ENCODE measurements at regions of chr16 and their contacts with region 1.

Region 1: DNA sequence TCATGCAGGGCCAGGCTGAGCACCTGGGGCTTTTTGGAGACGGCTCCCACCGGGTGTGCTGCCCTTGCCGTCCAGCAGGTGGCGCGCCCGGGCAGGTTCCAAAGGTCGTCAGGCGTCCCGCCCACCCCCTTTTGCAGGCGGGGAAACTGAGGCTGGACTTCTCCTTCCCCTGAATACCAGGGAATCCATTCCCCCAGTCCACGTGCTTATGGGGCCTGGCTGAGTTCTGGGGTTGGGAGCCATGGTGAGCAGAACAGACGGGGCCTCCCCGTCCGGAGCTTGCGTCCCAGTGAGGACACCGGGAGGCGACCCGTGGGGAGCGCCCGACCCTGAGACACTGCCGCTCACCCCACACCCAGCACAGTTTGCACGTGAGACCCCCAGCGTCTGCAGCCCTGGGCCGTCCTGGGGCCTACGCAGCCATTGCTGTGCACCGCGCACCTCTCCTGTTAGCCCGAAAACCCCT is 51.8 kb upstream of the JPH3 start:
- DNase-seq: peak; percentile 41
- H3K4me3 ChIP-seq: no peak overlapping the region
- H3K27ac ChIP-seq: no peak overlapping the region
- H3K4me1 ChIP-seq: no peaks in the 10 kb centered on the region
- CTCF ChIP-seq: peak; percentile 93

Region 2: GRCh38 chr16:87216474-87217275 is 333.9 kb before region 1 on chr16:
- CTCF ChIA-PET with region 1: no interaction called
- POLR2A ChIA-PET with region 1: no interaction called
- intact Hi-C with region 1: no loop called
- DNase-seq: no peak
- H3K4me3 ChIP-seq: no peak overlapping the region
- H3K27ac ChIP-seq: no peak overlapping the region
- H3K4me1 ChIP-seq: no peaks in the 10 kb centered on the region
- CTCF ChIP-seq: no peak

Region 3: DNA sequence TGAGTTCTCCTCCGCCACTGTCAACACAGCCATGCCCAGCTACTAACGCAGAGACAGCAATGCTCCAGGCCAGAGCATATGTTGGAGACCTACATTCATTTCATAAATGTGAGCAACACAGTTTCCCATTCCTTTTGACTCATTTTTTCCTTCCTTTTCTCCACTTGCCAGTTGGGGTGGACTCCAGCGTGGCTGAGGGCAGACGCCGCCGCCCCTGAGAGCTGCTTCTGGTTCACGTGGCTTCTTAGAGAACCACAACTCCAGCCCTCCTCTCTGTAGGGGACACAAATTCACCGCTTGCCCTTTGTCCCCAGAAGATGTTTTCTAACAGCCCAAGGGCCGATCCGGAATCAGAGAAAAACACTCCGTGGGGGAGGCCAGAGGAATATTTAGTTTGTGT is 11.9 kb before region 1 on chr16:
- CTCF ChIA-PET with region 1: no interaction called
- POLR2A ChIA-PET with region 1: no interaction called
- intact Hi-C with region 1: no loop called
- DNase-seq: no peak
- H3K4me3 ChIP-seq: no peak overlapping the region
- H3K27ac ChIP-seq: no peak overlapping the region
- H3K4me1 ChIP-seq: no peaks in the 10 kb centered on the region
- CTCF ChIP-seq: no peak

Region 4: DNA sequence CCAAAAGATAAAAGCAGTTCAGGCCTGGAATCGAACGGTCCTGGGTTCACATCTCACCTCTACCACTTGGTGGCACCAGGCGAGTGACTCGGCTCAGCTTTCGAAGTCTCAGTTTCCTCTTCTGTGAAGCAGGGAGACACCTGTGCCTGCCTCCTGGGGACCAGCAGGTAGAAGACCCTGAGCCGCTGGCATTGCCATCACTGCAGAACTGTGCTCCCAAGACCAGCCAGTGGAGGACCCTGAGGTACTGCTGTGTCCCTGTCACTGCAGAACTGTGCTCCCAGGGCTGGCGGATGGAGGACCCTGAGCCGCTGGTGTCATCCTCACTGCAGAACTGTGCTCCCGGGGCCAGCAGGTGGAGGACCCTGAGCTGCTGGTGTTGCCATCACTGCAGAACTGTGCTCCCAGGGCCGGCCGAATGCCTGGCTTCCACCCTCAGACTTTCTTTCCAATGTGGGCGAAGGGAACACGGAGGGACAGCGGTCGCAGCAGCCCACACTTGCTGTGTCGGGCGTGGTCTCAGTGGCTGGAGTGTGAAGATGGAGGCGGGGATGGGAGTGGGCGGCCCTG is 327.5 kb after region 1 on chr16:
- CTCF ChIA-PET with region 1: no interaction called
- POLR2A ChIA-PET with region 1: no interaction called
- intact Hi-C with region 1: loop called (anchors 10 kb)
- DNase-seq: peak; percentile 73
- H3K4me3 ChIP-seq: no peak overlapping the region
- H3K27ac ChIP-seq: no peak overlapping the region
- H3K4me1 ChIP-seq: peaks cover 11% of the 10 kb centered on the region
- CTCF ChIP-seq: peak; percentile 73